ENCODE measurements at regions of chr1 and their contacts with region 1.

Region 1: GRCh38 chr1:183318433-183318832 is 99.7 kb downstream of the NMNAT2 start:
- DNase-seq: no peak
- H3K4me3 ChIP-seq: no peak overlapping the region
- H3K27ac ChIP-seq: no peak overlapping the region
- H3K4me1 ChIP-seq: peaks cover 2 to 21% (median 10%) of the 10 kb centered on the region in 4 experiments; a peak in 6 of 7 replicates
- H3K27me3 ChIP-seq: no peaks in the 10 kb centered on the region
- CTCF ChIP-seq: peak; percentile 24 to 52 (median 52)
- EP300 ChIP-seq: no peak; a peak in 1 of 3 replicates
- POLR2A ChIP-seq: no peak
- RAD21 ChIP-seq: peak; percentile 64 to 78

Region 2: DNA sequence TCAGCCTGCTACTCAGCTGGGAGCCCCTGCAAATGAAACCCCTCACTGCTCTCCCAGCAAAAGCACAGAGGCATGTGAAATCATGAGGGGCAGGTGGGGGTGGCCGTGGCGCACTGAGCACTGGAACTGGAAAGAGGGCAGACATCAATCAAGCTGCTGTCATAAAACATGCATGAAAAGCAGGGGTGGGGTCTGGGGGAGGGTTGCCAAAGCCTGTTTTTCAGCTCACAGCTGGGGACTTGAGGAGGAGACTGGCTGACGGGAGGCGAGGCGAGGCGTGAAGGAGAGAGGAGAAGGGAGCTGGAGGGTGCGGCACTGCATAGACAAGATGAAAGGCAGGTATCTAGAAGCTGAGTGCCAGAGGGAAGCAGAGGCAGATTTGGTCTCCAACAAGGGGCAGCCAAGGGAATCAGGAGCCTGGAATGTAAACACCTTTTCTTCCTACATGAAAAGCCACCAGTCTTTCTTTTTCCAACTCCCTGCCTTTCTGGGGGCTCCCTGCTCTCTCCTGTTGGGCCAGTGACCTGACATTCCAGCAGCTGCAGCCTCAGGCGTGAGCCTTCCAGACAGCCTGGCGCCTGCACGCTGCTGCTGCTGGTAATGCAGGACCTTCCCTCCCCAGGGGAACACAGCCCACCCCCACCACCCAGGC is 12.8 kb after region 1 on chr1:
- CTCF ChIA-PET with region 1: interaction called, 13 read pairs
- POLR2A ChIA-PET with region 1: interaction called, 13 read pairs
- DNase-seq: peak in 1 of 2 experiments; percentile 66
- H3K4me3 ChIP-seq: peak overlapping the region in 1 of 4 experiments; percentile 15; a peak in 1 of 8 replicates
- H3K27ac ChIP-seq: no peak overlapping the region
- H3K4me1 ChIP-seq: peaks cover 0 to 20% (median 16%) of the 10 kb centered on the region in 4 experiments; a peak in 6 of 7 replicates
- H3K27me3 ChIP-seq: no peaks in the 10 kb centered on the region
- CTCF ChIP-seq: peak in 2 of 3 experiments; percentile 33 to 56; a peak in 3 of 4 replicates
- EP300 ChIP-seq: no peak
- POLR2A ChIP-seq: no peak
- RAD21 ChIP-seq: peak in 1 of 2 experiments; percentile 32; a peak in 1 of 4 replicates

Region 3: GRCh38 chr1:183346276-183346732 is 27.9 kb after region 1 on chr1:
- CTCF ChIA-PET with region 1: no interaction called
- POLR2A ChIA-PET with region 1: no interaction called
- DNase-seq: no peak
- H3K4me3 ChIP-seq: no peak overlapping the region
- H3K27ac ChIP-seq: no peak overlapping the region
- H3K4me1 ChIP-seq: peaks cover 0 to 8% (median 1%) of the 10 kb centered on the region in 4 experiments; a peak in 2 of 7 replicates
- H3K27me3 ChIP-seq: no peaks in the 10 kb centered on the region
- CTCF ChIP-seq: no peak
- EP300 ChIP-seq: no peak
- POLR2A ChIP-seq: no peak
- RAD21 ChIP-seq: no peak

Region 4: DNA sequence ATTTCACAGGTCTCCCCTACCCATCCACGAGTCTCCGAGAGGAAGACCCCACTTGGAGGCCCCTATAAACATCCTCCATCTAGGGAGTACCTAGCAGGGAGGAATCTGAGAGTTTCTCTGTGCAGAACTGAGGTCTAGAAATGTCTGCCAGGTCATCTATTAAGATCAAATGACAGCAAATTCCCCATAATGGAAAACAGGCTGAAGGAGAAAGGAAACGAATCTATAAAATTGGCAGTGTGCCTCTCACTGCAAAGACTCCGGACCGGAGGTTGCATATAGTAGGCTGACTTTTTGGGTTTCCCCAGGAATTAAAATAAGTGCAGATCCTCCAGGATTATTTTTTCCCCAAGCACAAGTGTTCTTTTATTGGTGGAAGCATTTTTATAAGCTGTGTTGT is 42.0 kb after region 1 on chr1:
- CTCF ChIA-PET with region 1: no interaction called
- POLR2A ChIA-PET with region 1: no interaction called
- DNase-seq: no peak
- H3K4me3 ChIP-seq: no peak overlapping the region
- H3K27ac ChIP-seq: no peak overlapping the region
- H3K4me1 ChIP-seq: no peaks in the 10 kb centered on the region
- H3K27me3 ChIP-seq: no peaks in the 10 kb centered on the region
- CTCF ChIP-seq: no peak
- EP300 ChIP-seq: no peak
- POLR2A ChIP-seq: no peak
- RAD21 ChIP-seq: no peak

Region 5: GRCh38 chr1:183419399-183419798 is 101.0 kb after region 1 on chr1:
- CTCF ChIA-PET with region 1: no interaction called
- POLR2A ChIA-PET with region 1: no interaction called
- DNase-seq: no peak
- H3K4me3 ChIP-seq: no peak overlapping the region
- H3K27ac ChIP-seq: no peak overlapping the region
- H3K4me1 ChIP-seq: peaks cover 3 to 9% (median 7%) of the 10 kb centered on the region in 4 experiments
- H3K27me3 ChIP-seq: peaks cover 2 to 15% (median 12%) of the 10 kb centered on the region in 4 experiments; a peak in 6 of 7 replicates
- CTCF ChIP-seq: no peak
- EP300 ChIP-seq: no peak
- POLR2A ChIP-seq: no peak
- RAD21 ChIP-seq: no peak

Region 6: DNA sequence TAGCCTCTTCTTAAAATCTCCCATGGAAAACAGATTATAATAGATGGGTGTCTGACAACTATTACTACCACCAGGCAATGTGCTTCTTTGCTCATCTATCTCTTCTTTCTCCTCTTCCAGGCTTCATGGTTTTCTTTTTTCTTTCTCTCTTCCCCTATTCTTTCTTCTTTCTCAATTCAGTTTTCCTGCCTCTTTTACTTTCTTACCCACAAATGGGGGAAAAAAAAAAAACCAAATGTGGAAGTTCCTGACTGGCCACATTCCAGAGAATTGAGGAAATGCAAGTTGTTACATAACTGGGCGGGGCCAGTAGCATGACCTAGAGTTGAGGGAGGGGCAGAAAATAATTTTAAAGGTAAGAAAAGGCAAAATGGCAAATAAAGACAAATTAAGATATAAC is 142.9 kb after region 1 on chr1:
- CTCF ChIA-PET with region 1: no interaction called
- POLR2A ChIA-PET with region 1: no interaction called
- DNase-seq: no peak
- H3K4me3 ChIP-seq: peak overlapping the region in 1 of 4 experiments; percentile 20; a peak in 1 of 8 replicates
- H3K27ac ChIP-seq: no peak overlapping the region
- H3K4me1 ChIP-seq: peaks cover 0 to 6% (median 3%) of the 10 kb centered on the region in 4 experiments; a peak in 4 of 7 replicates
- H3K27me3 ChIP-seq: no peaks in the 10 kb centered on the region
- CTCF ChIP-seq: no peak
- EP300 ChIP-seq: peak in 1 of 2 experiments; percentile 78; a peak in 1 of 3 replicates
- POLR2A ChIP-seq: no peak
- RAD21 ChIP-seq: no peak